ENCODE measurements at regions of chr12 and their contacts with region 1.

Region 1: DNA sequence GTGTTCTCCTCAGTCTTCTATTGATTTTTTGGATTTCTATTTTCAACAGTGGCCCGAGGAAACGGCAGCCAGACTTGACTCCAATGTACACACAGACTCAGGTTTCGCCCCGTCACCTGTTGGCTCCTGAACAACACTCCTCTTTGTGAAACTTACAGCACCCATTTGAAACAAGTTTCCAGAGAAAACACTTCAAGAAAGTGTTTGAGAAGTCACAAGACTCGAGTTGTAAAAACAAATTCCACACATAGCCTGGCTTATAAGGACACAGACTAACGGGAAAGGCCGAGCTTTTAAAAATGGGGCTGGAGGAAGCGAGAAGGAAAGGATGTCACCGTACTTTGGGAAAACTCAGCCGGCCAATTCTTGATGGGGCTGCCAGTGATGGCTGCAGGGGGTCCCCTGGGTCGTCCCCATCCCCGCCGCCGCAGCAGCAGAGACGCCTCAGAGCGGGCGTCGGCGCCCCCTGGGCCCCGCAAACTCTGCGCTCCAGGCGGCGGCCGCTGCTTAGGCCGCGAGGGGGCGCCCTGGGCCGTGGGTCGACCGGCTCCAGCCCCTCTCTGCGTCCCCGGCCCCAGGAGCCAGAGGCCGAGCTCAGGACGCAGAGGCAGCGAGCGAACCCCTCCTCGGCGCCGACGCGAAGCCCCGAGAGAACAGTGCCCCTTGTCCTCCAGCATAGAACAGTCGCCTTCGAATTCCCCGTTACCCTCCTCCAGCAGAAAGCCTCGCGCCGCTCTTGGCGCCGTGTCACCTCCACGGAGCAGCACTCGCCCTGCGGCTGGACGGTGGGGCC is 106.9 kb downstream of the PRICKLE1 start:
- DNase-seq: peak; percentile 94
- H3K4me3 ChIP-seq: peak overlapping the region; percentile 66 to 97 (median 80)
- H3K27ac ChIP-seq: peak overlapping the region; percentile 81 to 94 (median 90)
- H3K4me1 ChIP-seq: peaks cover 7 to 72% (median 45%) of the 10 kb centered on the region in 6 donors
- H3K27me3 ChIP-seq: peaks cover 0 to 28% (median 8%) of the 10 kb centered on the region in 7 donors
- CTCF ChIP-seq: peak; percentile 66 to 95 (median 87)
- POLR2A ChIP-seq: no peak

Region 2: DNA sequence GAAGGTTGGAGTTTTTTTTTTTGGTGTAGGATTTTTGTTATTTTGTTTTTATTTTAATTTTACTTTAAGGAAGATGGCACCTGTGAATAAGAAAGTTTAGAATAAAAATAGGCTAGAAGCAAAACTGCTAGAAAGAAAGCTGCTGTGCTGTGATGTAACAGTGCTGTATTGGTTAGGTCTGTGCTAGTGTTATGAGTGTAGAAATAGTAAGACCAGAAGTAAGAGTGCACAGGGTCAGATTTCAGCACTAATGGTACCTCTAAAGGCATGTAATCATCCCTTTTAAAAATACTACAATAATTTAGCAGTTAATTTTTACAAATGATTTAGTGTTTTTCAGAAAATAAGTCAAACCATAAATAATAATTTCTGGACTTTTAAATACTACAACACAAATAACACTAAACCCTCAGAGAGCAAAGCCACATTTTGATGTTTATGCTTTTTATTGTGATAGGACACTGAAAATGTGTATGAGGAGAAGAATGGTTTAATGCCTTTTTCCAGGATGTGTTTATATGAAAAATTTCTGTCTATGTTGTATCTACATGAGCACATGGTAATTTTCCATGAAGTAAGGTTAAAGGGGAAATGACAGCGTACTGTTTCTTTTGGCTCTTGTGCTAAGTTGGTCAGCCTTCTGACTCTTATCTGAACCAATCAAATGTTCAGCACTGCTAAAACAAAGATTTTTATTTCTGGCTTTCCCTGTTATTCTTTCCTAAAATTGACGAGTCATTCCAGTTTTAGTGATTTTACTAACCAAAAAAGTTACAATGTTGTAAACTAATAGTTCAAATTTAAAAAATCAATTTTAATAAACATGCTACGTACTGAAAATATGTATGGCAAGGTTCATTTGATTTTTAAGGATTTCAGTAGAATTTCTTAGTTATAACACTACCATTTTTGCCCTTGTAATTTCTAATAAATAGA is 60.5 kb before region 1 on chr12:
- intact Hi-C with region 1: no loop called
- DNase-seq: no peak
- H3K4me3 ChIP-seq: no peak overlapping the region
- H3K27ac ChIP-seq: peak overlapping the region in 6 of 8 donors; percentile 3 to 47 (median 28)
- H3K4me1 ChIP-seq: peaks cover 14 to 43% (median 31%) of the 10 kb centered on the region in 6 donors
- H3K27me3 ChIP-seq: no peaks in the 10 kb centered on the region
- CTCF ChIP-seq: no peak
- POLR2A ChIP-seq: no peak

Region 3: DNA sequence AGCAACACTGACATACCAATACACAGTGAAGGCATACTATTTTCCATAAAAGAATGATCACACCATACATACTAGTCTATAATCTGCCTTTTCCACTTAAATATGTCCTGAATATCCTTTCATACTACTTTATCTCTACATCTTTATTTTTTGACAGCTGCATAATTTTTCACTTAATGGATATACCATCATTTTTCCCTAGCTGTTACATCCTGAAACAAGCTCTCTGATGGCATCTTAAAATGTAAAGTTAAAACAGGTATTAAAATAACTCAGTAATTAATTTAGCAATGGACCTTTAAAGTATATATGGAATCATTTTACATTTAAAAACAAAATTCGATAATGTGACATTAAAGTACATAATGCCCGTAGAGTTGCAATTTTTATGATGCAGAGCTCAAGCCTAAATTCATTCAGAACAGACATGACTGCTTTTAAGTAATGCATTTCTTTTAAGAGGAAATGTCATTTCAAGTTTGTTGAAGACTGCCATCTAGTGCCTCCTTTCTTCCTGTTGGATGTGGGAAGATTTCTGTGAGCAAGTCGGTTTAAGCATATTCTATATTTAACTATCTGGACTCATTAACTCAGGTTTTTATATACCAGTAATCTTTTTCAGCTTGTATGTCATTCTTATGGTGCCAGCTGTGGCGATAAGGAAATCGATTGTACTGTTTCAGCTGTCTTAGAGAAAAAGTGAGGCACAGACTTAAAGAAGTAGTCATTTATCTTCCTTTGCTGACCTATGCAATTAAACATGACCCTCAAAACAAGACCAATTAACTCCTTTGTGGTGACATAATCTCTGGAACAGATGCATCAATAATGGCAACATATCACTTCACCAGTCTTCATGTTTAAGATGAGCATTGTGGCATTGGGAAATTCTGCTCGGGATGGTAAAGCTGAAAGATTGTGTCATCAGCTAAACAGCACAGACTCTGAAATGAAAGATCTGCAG is 86.6 kb after region 1 on chr12:
- intact Hi-C with region 1: loop called (anchors 10 kb)
- DNase-seq: no peak
- H3K4me3 ChIP-seq: no peak overlapping the region
- H3K27ac ChIP-seq: no peak overlapping the region
- H3K4me1 ChIP-seq: peaks cover 0 to 33% (median 10%) of the 10 kb centered on the region in 6 donors
- H3K27me3 ChIP-seq: no peaks in the 10 kb centered on the region
- CTCF ChIP-seq: peak in 10 of 11 experiments; percentile 24 to 69 (median 55)
- POLR2A ChIP-seq: no peak

Region 4: DNA sequence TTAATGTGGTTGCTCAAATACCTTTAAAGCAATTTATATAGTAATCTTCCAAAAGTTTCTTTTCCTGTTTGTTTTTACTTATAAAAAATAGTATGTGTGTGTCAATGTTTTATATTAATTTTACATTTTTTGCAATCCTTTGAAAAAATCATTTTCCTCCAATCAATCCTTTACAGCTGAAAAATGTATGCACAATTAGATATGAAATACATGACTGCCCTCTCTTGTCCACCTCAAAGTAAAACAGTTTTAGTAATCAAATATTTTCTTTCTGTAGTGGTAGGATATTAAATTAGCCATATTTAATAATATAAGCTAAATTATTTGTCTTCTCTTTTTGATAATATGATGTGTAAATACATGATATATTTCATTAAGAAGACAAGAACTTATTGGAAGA is 799.5 kb after region 1 on chr12:
- intact Hi-C with region 1: loop called (anchors 10 kb)
- DNase-seq: no peak
- H3K4me3 ChIP-seq: no peak overlapping the region
- H3K27ac ChIP-seq: no peak overlapping the region
- H3K4me1 ChIP-seq: peaks cover 0 to 12% (median 7%) of the 10 kb centered on the region in 6 donors
- H3K27me3 ChIP-seq: no peaks in the 10 kb centered on the region
- CTCF ChIP-seq: peak in 7 of 11 experiments; percentile 16 to 50 (median 26)
- POLR2A ChIP-seq: no peak

Measured in spleen (tissue), 13 donors.